CD8-positive, alpha-beta T cell (primary cell): ENCODE measurements at regions of chr2 and their contacts with region 1.

Region 1: GRCh38 chr2:136135921-136136906 is 18.3 kb upstream of the CXCR4 start:
- DNase-seq: peak; percentile 71 to 98 (median 84)
- ATAC-seq: peak; percentile 52
- H3K4me3 ChIP-seq: peak overlapping the region; percentile 10 to 23
- H3K4me3 Mint-ChIP-seq: peak overlapping the region; percentile 61
- H3K27ac ChIP-seq: peak overlapping the region; percentile 89 to 98
- H3K27ac Mint-ChIP-seq: peak overlapping the region; percentile 100
- H3K4me1 ChIP-seq: peaks cover 87% of the 10 kb centered on the region
- H3K4me1 Mint-ChIP-seq: peaks cover 96% of the 10 kb centered on the region
- H3K27me3 ChIP-seq: no peaks in the 10 kb centered on the region
- H3K27me3 Mint-ChIP-seq: no peaks in the 10 kb centered on the region
- CTCF ChIP-seq: no peak

Region 2: GRCh38 chr2:135531231-135532228 is 604.7 kb before region 1 on chr2 and contains the start of gene R3HDM1:
- CTCF ChIA-PET with region 1: no interaction called
- POLR2A ChIA-PET with region 1: no interaction called
- intact Hi-C with region 1: loop called in 1 of 2 experiments (anchors 5 kb)
- DNase-seq: peak; percentile 88 to 99 (median 94)
- ATAC-seq: peak; percentile 75
- H3K4me3 ChIP-seq: peak within 1 kb of the TSS; percentile 74 to 84
- H3K4me3 Mint-ChIP-seq: no peak within 1 kb of the TSS
- H3K27ac ChIP-seq: peak within 1 kb of the TSS; percentile 79 to 91
- H3K27ac Mint-ChIP-seq: no peak within 1 kb of the TSS
- H3K4me1 ChIP-seq: peaks cover 15% of the 10 kb centered on the region
- H3K4me1 Mint-ChIP-seq: peaks cover 29% of the 10 kb centered on the region
- H3K27me3 ChIP-seq: no peaks in the 10 kb centered on the region
- H3K27me3 Mint-ChIP-seq: no peaks in the 10 kb centered on the region
- CTCF ChIP-seq: no peak
- total RNA-seq, gene R3HDM1: 35.3 to 48.2 TPM

Region 3: DNA sequence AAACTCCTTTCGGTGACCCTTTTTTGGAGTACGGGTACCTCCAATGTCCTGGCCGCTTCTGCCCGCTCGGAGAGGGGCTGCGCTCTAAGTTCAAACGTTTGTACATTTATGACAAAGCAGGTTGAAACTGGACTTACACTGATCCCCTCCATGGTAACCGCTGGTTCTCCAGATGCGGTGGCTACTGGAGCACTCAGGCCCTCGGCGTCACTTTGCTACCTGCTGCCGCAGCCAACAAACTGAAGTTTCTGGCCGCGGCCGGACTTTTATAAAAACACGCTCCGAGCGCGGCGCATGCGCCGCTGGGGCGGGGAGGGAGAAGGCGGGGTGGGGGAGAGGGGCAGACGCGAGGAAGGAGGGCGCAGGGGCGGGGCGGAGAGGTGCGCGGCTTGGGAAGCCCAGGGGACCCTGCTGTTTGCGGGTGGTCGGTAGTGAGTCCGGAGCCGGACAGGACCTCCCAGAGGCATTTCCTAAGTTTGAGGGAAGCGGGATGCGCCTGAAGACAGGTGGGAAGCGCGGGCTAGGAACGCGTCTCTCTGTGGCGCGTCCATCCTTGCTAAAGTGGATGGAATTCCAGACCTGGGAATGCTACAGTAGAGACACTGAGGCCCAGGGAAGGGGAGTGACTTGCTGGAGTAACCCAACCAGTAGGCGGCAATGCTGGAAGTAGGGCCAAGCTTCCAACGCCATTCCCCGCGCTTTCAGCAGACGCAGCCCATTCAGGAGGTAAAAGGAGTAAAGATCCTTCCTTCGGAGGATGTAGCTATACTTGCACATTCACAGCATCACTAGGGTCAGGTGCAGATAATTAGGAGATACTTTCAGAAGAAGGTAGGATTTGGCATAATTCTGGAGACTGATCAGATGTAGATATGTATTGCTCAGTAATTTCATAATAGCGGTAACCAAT is 18.1 kb before region 1 on chr2 and contains the start of gene CXCR4:
- CTCF ChIA-PET with region 1: interaction called, 14 read pairs
- POLR2A ChIA-PET with region 1: interaction called, 328 read pairs
- intact Hi-C with region 1: loop called (anchors 1 kb)
- DNase-seq: peak; percentile 92 to 99 (median 94)
- ATAC-seq: peak; percentile 35
- H3K4me3 ChIP-seq: peak within 1 kb of the TSS; percentile 77 to 83
- H3K4me3 Mint-ChIP-seq: peak within 1 kb of the TSS; percentile 97
- H3K27ac ChIP-seq: peak within 1 kb of the TSS; percentile 87 to 100
- H3K27ac Mint-ChIP-seq: peak within 1 kb of the TSS; percentile 100
- H3K4me1 ChIP-seq: peaks cover 60% of the 10 kb centered on the region
- H3K4me1 Mint-ChIP-seq: peaks cover 64% of the 10 kb centered on the region
- H3K27me3 ChIP-seq: no peaks in the 10 kb centered on the region
- H3K27me3 Mint-ChIP-seq: no peaks in the 10 kb centered on the region
- CTCF ChIP-seq: no peak
- total RNA-seq, gene CXCR4: 2,159 to 2,188 TPM

Region 4: GRCh38 chr2:136212423-136213378 is 76.5 kb after region 1 on chr2:
- CTCF ChIA-PET with region 1: no interaction called
- POLR2A ChIA-PET with region 1: interaction called, 10 read pairs
- intact Hi-C with region 1: loop called (anchors 5 kb)
- DNase-seq: peak in 6 of 9 experiments; percentile 35 to 82 (median 56)
- ATAC-seq: peak; percentile 92
- H3K4me3 ChIP-seq: no peak overlapping the region
- H3K4me3 Mint-ChIP-seq: peak overlapping the region; percentile 53
- H3K27ac ChIP-seq: peak overlapping the region; percentile 13 to 57
- H3K27ac Mint-ChIP-seq: peak overlapping the region; percentile 93
- H3K4me1 ChIP-seq: peaks cover 26% of the 10 kb centered on the region
- H3K4me1 Mint-ChIP-seq: peaks cover 46% of the 10 kb centered on the region
- H3K27me3 ChIP-seq: no peaks in the 10 kb centered on the region
- H3K27me3 Mint-ChIP-seq: no peaks in the 10 kb centered on the region
- CTCF ChIP-seq: no peak

Region 5: DNA sequence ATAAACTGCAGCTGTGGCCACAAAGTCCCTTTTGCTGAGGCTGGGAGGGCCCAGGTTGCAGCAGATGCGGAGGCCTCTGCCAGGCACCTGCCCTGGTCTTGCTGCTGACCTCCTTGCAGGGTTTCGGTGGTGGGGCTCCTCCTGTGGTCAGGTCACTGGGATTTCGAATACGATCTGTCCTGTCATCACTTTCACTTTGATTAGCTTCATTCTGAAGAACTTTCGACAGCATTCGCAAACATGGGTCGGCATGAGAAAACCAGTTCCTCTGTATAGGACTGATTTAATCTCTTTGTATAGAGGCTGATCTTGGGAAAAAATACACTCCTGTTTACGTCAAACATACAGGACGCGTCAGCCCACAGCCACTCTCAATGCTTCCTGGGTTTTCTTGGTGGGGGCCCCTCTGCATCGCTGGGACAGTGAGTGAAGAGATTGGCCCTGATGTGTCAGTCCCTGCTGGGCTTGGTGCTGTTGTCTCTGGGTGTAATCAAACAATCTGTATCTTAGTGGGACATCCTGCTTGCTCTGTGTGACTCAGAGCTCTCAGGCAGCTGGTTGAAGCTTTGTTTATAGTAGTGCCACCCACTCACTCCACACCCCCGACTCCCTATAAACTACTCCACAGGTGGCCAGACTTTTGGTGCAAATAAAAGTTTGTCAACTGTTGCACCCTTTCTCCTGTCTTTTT is 191.1 kb after region 1 on chr2:
- CTCF ChIA-PET with region 1: no interaction called
- POLR2A ChIA-PET with region 1: interaction called, 16 read pairs
- intact Hi-C with region 1: loop called (anchors 1 kb)
- DNase-seq: peak; percentile 61 to 96 (median 82)
- ATAC-seq: peak; percentile 93
- H3K4me3 ChIP-seq: peak overlapping the region; percentile 24 to 26
- H3K4me3 Mint-ChIP-seq: peak overlapping the region; percentile 72
- H3K27ac ChIP-seq: peak overlapping the region; percentile 59 to 83
- H3K27ac Mint-ChIP-seq: peak overlapping the region; percentile 94
- H3K4me1 ChIP-seq: peaks cover 43% of the 10 kb centered on the region
- H3K4me1 Mint-ChIP-seq: peaks cover 62% of the 10 kb centered on the region
- H3K27me3 ChIP-seq: no peaks in the 10 kb centered on the region
- H3K27me3 Mint-ChIP-seq: no peaks in the 10 kb centered on the region
- CTCF ChIP-seq: no peak